ENCODE measurements at regions of chrX and their contacts with region 1.

Region 1: DNA sequence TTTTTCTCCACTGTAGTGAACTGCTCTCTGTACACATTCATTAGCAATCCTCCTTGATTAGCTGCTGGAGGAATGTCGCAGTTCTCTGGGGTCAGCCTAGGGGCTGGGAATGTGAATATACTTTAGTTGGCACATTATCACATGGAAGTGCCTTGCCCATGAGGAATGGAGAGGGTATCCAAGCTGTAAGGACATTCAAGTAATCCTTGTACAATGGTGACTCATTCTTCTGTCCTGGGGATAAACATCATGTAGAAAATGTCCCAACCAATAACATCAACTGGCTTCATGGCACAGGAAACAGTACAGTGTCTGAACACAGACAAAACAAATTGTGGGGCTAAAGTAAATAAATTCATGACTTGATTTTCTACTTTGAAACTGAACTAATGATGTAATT is 147.1 kb downstream of the GLRA2 start:
- DNase-seq: no peak
- H3K4me3 ChIP-seq: no peak overlapping the region
- H3K27ac ChIP-seq: no peak overlapping the region
- H3K4me1 ChIP-seq: no peaks in the 10 kb centered on the region
- H3K27me3 ChIP-seq: no peaks in the 10 kb centered on the region
- CTCF ChIP-seq: no peak

Region 2: GRCh38 chrX:14630733-14631132 is 45.7 kb before region 1 on chrX:
- intact Hi-C with region 1: loop called (anchors 2 kb)
- DNase-seq: no peak
- H3K4me3 ChIP-seq: no peak overlapping the region
- H3K27ac ChIP-seq: no peak overlapping the region
- H3K4me1 ChIP-seq: no peaks in the 10 kb centered on the region
- H3K27me3 ChIP-seq: no peaks in the 10 kb centered on the region
- CTCF ChIP-seq: no peak

Measured in colonic mucosa (tissue), 4 donors.